GM12878 (cell line): ENCODE measurements at regions of chr1 and their contacts with region 1.

Region 1: DNA sequence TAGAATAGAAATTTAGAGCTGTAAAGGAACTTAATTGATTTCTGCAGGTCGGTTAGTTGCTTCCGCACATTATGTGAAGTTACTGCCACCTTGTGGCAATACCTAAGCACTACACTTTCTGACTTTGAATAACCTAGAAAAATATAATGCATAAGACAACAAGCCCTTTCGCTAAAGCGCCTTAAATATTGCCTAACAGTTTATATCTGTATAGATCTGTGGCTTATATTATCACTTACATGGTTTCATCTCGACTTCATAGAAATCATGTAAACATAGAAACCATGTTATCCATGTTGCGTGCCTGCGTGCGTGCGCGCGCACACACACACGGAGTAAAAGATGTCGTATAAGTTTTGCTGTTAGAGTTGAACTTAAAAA is 10.9 kb upstream of the IFI16 start:
- DNase-seq: peak; percentile 50
- ATAC-seq: peak; percentile 68
- H3K4me3 ChIP-seq: no peak overlapping the region
- H3K27ac ChIP-seq: no peak overlapping the region
- H3K4me1 ChIP-seq: peaks cover 7% of the 10 kb centered on the region
- H3K27me3 ChIP-seq: no peaks in the 10 kb centered on the region
- CTCF ChIP-seq: peak; percentile 68 to 81 (median 80)
- EP300 ChIP-seq: no peak
- POLR2A ChIP-seq: no peak
- RAD21 ChIP-seq: peak; percentile 96

Region 2: GRCh38 chr1:158203693-158204457 is 794.9 kb before region 1 on chr1:
- CTCF ChIA-PET with region 1: interaction called, 21 read pairs
- POLR2A ChIA-PET with region 1: no interaction called
- RAD21 ChIA-PET with region 1: interaction called, 18 read pairs
- SMC1A ChIA-PET with region 1: interaction called, 21 read pairs
- in situ Hi-C with region 1: no loop called
- intact Hi-C with region 1: loop called (anchors 2 kb)
- DNase-seq: peak; percentile 8
- ATAC-seq: peak; percentile 92
- H3K4me3 ChIP-seq: no peak overlapping the region
- H3K27ac ChIP-seq: no peak overlapping the region
- H3K4me1 ChIP-seq: no peaks in the 10 kb centered on the region
- H3K27me3 ChIP-seq: no peaks in the 10 kb centered on the region
- CTCF ChIP-seq: peak; percentile 56 to 70 (median 56); a peak in 5 of 6 replicates
- EP300 ChIP-seq: no peak
- POLR2A ChIP-seq: no peak
- RAD21 ChIP-seq: peak; percentile 68

Region 3: DNA sequence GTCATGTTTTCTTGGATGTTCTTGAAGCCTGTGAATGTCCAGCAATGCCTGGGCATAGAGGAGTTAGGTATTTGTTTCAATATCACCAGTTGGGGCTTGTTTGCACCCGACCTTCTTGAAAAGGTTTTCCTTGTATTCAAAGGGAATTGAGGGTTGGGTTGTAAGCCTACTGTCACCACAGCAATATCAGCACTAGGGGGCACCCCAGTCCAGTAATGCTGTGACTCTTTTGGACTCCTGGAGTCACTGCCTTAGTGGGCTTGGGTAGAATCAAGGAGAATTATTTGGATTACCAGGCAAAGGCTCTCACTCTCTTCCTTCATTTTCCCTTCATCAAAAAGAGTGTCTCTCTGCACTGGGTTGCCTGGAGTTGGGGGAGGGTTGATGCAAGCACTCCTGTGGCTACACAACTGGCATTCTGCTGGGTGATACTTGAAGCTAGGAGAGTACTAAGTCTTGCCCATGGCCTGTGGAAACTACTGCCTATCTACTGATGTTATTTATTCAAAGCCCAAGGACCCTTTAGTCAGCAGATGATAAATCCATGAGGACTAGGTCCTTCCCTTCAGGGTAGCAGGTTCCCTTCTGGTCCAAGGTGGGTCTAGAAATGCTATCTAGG is 492.3 kb before region 1 on chr1:
- CTCF ChIA-PET with region 1: interaction called, 45 read pairs
- POLR2A ChIA-PET with region 1: no interaction called
- RAD21 ChIA-PET with region 1: interaction called, 37 read pairs
- SMC1A ChIA-PET with region 1: interaction called, 33 read pairs
- in situ Hi-C with region 1: loop called (anchors 5 kb)
- intact Hi-C with region 1: loop called (anchors 1 kb)
- DNase-seq: peak; percentile 8
- ATAC-seq: peak; percentile 93
- H3K4me3 ChIP-seq: no peak overlapping the region
- H3K27ac ChIP-seq: no peak overlapping the region
- H3K4me1 ChIP-seq: no peaks in the 10 kb centered on the region
- H3K27me3 ChIP-seq: no peaks in the 10 kb centered on the region; a peak in 1 of 4 replicates
- CTCF ChIP-seq: peak; percentile 66 to 72 (median 67)
- EP300 ChIP-seq: no peak
- POLR2A ChIP-seq: no peak
- RAD21 ChIP-seq: peak; percentile 87

Region 4: DNA sequence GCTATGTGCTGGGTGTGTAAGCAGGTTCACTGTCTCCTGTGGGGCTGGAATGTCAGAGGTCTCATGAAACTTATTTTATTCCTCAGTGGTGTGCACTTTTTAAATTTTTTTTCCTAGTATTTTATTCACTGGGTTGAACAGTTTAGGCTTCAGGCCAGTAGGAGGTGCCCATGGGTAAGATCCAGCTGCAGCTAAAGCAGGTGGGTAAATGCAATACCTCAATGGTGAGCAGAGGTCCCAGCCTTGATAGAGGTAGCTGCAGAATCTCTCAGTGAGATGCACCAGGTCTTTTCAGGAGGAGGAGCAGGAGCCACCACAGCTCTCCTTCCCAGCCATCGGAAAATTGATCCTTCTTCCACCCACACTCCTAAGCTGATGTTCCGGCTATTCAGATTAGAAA is 205.2 kb before region 1 on chr1:
- CTCF ChIA-PET with region 1: interaction called, 62 read pairs
- POLR2A ChIA-PET with region 1: no interaction called
- RAD21 ChIA-PET with region 1: interaction called, 31 read pairs
- SMC1A ChIA-PET with region 1: interaction called, 59 read pairs
- in situ Hi-C with region 1: loop called (anchors 5 kb)
- intact Hi-C with region 1: loop called (anchors 1 kb)
- DNase-seq: no peak
- ATAC-seq: peak; percentile 87
- H3K4me3 ChIP-seq: no peak overlapping the region
- H3K27ac ChIP-seq: no peak overlapping the region
- H3K4me1 ChIP-seq: no peaks in the 10 kb centered on the region
- H3K27me3 ChIP-seq: no peaks in the 10 kb centered on the region
- CTCF ChIP-seq: peak; percentile 41 to 62 (median 59)
- EP300 ChIP-seq: no peak
- POLR2A ChIP-seq: no peak
- RAD21 ChIP-seq: peak; percentile 83

Region 5: GRCh38 chr1:158943059-158943458 is 55.7 kb before region 1 on chr1:
- CTCF ChIA-PET with region 1: no interaction called
- POLR2A ChIA-PET with region 1: no interaction called
- RAD21 ChIA-PET with region 1: no interaction called
- SMC1A ChIA-PET with region 1: no interaction called
- in situ Hi-C with region 1: no loop called
- intact Hi-C with region 1: loop called (anchors 5 kb)
- DNase-seq: no peak
- ATAC-seq: no peak
- H3K4me3 ChIP-seq: no peak overlapping the region
- H3K27ac ChIP-seq: no peak overlapping the region
- H3K4me1 ChIP-seq: no peaks in the 10 kb centered on the region
- H3K27me3 ChIP-seq: no peaks in the 10 kb centered on the region
- CTCF ChIP-seq: no peak
- EP300 ChIP-seq: no peak
- POLR2A ChIP-seq: no peak
- RAD21 ChIP-seq: no peak

Region 6: DNA sequence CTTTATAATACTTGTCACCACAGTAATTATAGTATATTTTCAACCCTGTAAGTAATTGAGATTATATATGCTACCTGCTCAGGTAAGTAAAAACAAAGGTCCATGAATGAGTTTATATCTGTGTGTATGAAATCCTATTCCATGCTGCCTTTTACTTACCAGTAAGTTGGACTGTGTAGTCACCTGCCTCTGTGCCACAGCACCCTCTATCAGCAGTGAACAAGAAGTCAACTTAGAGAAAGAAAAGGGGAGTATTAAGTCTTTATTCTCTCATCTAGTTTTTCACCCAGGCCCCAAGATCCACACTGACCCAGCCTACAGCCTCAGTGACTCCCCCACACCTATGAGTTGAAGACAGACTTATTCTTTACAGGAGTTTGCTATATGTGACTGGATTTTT is 25.9 kb before region 1 on chr1:
- CTCF ChIA-PET with region 1: interaction called, 11 read pairs
- POLR2A ChIA-PET with region 1: no interaction called
- RAD21 ChIA-PET with region 1: interaction called, 13 read pairs
- SMC1A ChIA-PET with region 1: interaction called, 5 read pairs
- in situ Hi-C with region 1: no loop called
- intact Hi-C with region 1: no loop called
- DNase-seq: no peak
- ATAC-seq: peak; percentile 75
- H3K4me3 ChIP-seq: no peak overlapping the region
- H3K27ac ChIP-seq: no peak overlapping the region
- H3K4me1 ChIP-seq: no peaks in the 10 kb centered on the region
- H3K27me3 ChIP-seq: no peaks in the 10 kb centered on the region; a peak in 1 of 4 replicates
- CTCF ChIP-seq: peak in 2 of 3 experiments; percentile 38 to 52; a peak in 5 of 6 replicates
- EP300 ChIP-seq: no peak
- POLR2A ChIP-seq: no peak
- RAD21 ChIP-seq: peak; percentile 64

Region 7: DNA sequence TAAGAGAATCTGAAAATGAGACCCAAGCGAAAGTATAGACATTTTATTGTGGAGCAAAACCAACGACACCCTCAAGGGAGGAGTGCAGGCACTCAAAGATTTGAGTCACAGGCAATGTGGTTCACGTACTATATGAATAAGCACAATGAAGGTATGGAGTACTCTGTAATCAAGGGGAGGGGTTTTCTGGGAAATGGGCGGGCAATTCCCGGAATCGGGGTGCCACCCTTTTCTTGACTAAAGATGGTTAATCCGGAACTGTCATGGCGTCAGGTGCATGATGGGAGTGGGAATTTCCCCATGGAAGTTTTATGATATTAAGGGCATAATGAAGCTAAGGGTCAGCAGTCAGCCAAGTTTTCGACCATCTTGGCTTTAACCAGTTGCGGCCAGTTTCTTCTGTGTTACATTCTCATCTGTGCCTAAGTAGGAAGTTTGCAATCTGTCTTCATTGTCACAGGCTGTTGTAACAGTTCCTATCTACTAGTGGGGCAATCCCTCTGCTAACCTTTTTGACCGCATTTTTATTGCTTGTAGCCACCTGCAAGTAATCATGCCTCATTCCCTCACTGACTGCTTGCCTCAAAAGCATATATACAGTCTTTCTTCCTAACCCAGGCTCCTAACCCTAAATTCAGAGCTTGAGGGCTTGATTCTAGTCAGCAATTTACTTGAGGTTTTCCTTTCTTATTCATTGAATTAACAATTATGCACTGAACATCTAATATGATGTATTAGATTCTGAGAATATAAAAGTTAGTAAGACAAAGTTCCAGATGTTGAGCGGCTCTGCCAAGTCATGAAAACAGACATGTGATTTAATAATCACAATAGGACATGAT is 78.6 kb after region 1 on chr1:
- CTCF ChIA-PET with region 1: interaction called, 62 read pairs
- POLR2A ChIA-PET with region 1: interaction called, 4 read pairs
- RAD21 ChIA-PET with region 1: interaction called, 29 read pairs
- SMC1A ChIA-PET with region 1: interaction called, 46 read pairs
- in situ Hi-C with region 1: no loop called
- intact Hi-C with region 1: no loop called
- DNase-seq: peak; percentile 94
- ATAC-seq: peak; percentile 74
- H3K4me3 ChIP-seq: peak overlapping the region; percentile 64
- H3K27ac ChIP-seq: peak overlapping the region; percentile 89
- H3K4me1 ChIP-seq: peaks cover 11% of the 10 kb centered on the region
- H3K27me3 ChIP-seq: no peaks in the 10 kb centered on the region
- CTCF ChIP-seq: no peak
- EP300 ChIP-seq: peak; percentile 44 to 47; a peak in 2 of 4 replicates
- POLR2A ChIP-seq: peak; percentile 56; the same call in 1 of the 2 replicates
- RAD21 ChIP-seq: no peak